IMR-90 (cell line): ENCODE measurements at regions of chr2 and their contacts with region 1.

Region 1: GRCh38 chr2:55099878-55100820 is 49.9 kb upstream of the RTN4 start:
- DNase-seq: peak; percentile 84
- ATAC-seq: peak; percentile 31
- H3K4me3 ChIP-seq: no peak overlapping the region
- H3K27ac ChIP-seq: peak overlapping the region; percentile 99
- H3K4me1 ChIP-seq: peaks cover 20% of the 10 kb centered on the region
- H3K27me3 ChIP-seq: no peaks in the 10 kb centered on the region
- CTCF ChIP-seq: no peak
- POLR2A ChIP-seq: no peak
- RAD21 ChIP-seq: no peak

Region 2: GRCh38 chr2:55232084-55232862 is 132.1 kb after region 1 on chr2 and contains the starts of genes CLHC1 and RPS27A:
- CTCF ChIA-PET with region 1: no interaction called
- POLR2A ChIA-PET with region 1: no interaction called
- dilution Hi-C with region 1: no loop called
- in situ Hi-C with region 1: no loop called
- intact Hi-C with region 1: loop called (anchors 5 kb)
- DNase-seq: peak; percentile 97
- ATAC-seq: peak; percentile 93
- H3K4me3 ChIP-seq: peak within 1 kb of the TSS; percentile 75
- H3K27ac ChIP-seq: peak within 1 kb of the TSS; percentile 94
- H3K4me1 ChIP-seq: peaks cover 3% of the 10 kb centered on the region; the same call in 1 of the 2 replicates
- H3K27me3 ChIP-seq: no peaks in the 10 kb centered on the region
- CTCF ChIP-seq: no peak
- POLR2A ChIP-seq: peak; percentile 95
- RAD21 ChIP-seq: no peak
- total RNA-seq, gene CLHC1: 2.3 and 4.7 TPM in 2 replicates
- total RNA-seq, gene RPS27A: 496 and 1,448 TPM in 2 replicates

Region 3: GRCh38 chr2:55451699-55452098 is 351.6 kb after region 1 on chr2:
- CTCF ChIA-PET with region 1: no interaction called
- POLR2A ChIA-PET with region 1: no interaction called
- dilution Hi-C with region 1: no loop called
- in situ Hi-C with region 1: no loop called
- intact Hi-C with region 1: no loop called
- DNase-seq: no peak
- ATAC-seq: no peak
- H3K4me3 ChIP-seq: no peak overlapping the region
- H3K27ac ChIP-seq: no peak overlapping the region
- H3K4me1 ChIP-seq: no peaks in the 10 kb centered on the region
- H3K27me3 ChIP-seq: peaks cover 3% of the 10 kb centered on the region; the same call in 1 of the 2 replicates
- CTCF ChIP-seq: no peak
- POLR2A ChIP-seq: no peak
- RAD21 ChIP-seq: no peak